ENCODE measurements at regions of chr15 and their contacts with region 1.

Region 1: GRCh38 chr15:76150971-76151598 is 91.3 kb downstream of the TMEM266 start:
- DNase-seq: peak; percentile 93
- H3K4me3 Mint-ChIP-seq: no peak overlapping the region
- H3K27ac Mint-ChIP-seq: no peak overlapping the region
- H3K4me1 Mint-ChIP-seq: peaks cover 22% of the 10 kb centered on the region
- H3K27me3 Mint-ChIP-seq: peaks cover 13% of the 10 kb centered on the region

Region 2: DNA sequence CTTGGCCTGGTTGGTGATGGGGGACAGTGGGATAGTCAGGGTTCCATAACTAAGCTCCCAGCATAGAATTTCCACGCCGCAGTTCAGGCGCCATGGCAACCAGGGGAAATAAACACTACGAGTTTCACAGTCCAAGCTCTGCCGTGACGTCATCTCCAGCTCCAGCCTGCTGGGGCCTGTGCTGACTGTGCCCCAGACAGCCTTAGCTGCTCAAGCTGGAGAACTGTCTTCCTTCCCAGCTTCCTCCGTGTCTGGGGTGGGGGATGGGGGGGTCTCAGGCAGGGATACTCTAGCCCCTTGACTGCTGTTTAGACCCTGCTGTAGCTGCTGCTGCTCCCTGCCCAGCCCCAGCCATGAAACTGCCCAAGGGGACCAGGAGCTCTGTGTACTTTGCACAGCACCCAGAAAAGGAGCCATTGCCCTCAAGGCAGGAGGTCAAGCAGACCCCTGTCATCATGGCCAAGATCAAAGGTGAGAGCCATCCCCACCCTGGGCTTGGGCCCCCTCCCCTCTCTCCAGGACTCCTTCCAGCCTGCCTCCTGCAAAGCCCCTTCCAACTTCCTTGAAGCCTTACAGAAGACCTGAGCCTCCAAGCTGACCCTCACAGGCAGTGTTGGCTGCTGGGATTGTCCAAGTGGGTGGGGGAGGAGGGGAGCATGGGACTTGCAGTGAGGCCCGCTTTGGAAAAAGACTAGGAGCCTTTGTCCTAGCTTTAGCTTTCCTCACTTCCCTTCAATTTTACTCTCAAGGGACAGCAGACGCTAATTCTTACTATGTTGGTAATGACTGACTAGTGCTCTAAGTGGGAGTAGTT is 427.0 kb before region 1 on chr15:
- CTCF ChIA-PET with region 1: no interaction called
- intact Hi-C with region 1: loop called (anchors 1 kb)
- DNase-seq: peak; percentile 54
- H3K4me3 Mint-ChIP-seq: no peak overlapping the region
- H3K27ac Mint-ChIP-seq: no peak overlapping the region
- H3K4me1 Mint-ChIP-seq: peaks cover 6% of the 10 kb centered on the region
- H3K27me3 Mint-ChIP-seq: peaks cover 8% of the 10 kb centered on the region

Region 3: DNA sequence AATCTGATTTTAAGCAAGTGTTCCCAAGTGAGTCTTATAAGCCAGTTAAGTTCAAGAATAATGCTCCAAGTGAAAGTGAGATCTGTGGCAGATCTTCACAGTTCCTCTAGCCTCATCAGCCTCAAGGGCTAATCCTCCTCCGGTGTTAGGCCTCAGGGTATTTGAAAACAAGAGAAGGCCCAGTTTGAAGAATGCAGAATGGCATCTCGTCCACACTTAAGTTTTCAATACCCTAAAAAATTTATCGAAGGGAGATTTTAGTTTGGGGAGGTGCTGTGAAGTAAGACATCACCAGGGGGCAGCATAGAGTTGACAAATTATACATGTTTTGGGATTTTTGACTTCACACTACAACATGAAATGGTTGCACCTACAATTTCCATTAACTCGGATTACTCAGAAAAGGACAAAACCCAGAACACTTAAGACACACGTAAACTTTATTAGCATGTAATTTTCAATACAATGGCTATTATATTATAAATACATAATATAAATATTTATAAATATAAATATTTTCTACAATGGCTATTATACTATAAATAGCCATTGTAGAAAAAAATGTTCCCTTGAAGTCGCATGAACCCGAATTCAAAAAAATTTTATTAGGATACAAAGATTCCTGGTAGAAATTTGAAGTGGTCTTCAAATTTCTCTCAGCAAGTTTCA is 93.6 kb before region 1 on chr15:
- CTCF ChIA-PET with region 1: interaction called, 79 read pairs
- intact Hi-C with region 1: loop called (anchors 1 kb)
- DNase-seq: peak; percentile 62
- H3K4me3 Mint-ChIP-seq: no peak overlapping the region
- H3K27ac Mint-ChIP-seq: no peak overlapping the region
- H3K4me1 Mint-ChIP-seq: peaks cover 29% of the 10 kb centered on the region
- H3K27me3 Mint-ChIP-seq: peaks cover 34% of the 10 kb centered on the region

Region 4: DNA sequence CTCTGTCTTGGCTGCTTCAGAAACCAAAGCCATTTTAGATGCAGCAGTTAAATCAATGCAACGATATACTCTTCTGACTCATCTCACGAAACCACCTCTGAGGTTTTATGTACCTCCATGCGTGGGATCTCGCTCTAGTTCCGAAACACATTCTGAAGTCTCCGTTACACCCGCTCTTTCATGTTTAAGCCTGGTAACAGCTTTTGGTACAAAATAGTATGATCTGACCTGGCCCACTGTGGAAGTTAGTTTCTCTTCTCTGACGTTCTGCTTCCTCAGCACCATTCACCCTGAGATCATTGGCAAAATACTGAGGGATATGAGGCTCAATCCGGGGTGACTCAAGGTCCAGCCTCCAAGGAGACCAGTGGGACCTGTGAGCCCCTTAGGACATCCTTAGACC is 30.6 kb after region 1 on chr15:
- CTCF ChIA-PET with region 1: interaction called, 8 read pairs
- intact Hi-C with region 1: loop called (anchors 2 kb)
- DNase-seq: peak; percentile 55
- H3K4me3 Mint-ChIP-seq: no peak overlapping the region
- H3K27ac Mint-ChIP-seq: peak overlapping the region; percentile 1
- H3K4me1 Mint-ChIP-seq: peaks cover 11% of the 10 kb centered on the region
- H3K27me3 Mint-ChIP-seq: peaks cover 53% of the 10 kb centered on the region

Region 5: DNA sequence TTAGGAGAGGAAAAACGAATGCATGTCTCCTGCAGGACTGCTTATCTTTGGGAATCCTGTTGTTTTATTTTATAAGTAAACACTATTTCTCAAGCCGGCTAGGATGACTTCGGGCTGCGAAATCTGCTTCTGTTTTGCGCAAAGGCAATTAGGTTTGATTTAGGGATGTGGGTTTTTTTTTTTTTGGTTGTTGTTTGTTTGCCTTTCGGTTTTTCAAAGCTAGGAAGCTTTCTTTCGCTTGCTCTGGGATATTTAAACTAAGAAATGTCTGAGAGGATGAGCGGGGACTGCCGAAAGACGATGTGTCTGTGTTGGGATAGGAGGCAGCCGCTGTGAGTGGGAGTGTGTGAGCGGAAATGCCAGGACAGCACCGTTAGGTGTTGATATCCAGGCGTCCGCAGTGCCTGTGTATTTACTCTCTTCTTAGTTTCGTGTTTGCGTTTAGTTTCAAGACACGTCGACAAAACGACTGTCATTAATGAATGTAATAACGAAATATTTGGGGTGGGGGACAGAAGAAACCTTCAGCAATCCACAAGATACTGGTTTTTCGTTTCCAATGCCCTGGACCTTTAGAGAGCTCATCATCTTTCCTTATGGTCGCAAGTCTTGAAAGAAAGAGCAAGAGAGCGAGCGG is 186.1 kb after region 1 on chr15:
- CTCF ChIA-PET with region 1: no interaction called
- intact Hi-C with region 1: no loop called
- DNase-seq: no peak
- H3K4me3 Mint-ChIP-seq: peak overlapping the region; percentile 73
- H3K27ac Mint-ChIP-seq: no peak overlapping the region
- H3K4me1 Mint-ChIP-seq: peaks cover 49% of the 10 kb centered on the region
- H3K27me3 Mint-ChIP-seq: peaks cover 80% of the 10 kb centered on the region

Region 6: DNA sequence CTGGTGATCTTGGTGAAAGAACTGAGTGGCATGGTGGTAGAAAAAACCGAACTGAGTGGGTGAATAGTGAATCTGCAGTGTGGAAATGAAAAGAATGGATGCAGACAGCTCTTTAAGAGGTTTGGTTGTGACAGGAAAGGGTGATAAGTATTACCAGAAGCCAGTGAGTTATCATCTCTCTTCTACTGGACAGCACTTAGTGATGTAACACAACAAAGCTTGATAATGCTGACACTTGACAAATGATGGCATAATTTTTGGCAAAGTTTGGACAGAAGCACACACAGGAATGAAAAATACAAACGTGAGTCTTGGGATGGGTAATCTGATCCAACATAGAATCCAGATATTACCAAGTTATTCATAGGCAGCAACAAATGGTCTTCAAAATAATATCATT is 297.7 kb after region 1 on chr15:
- CTCF ChIA-PET with region 1: no interaction called
- intact Hi-C with region 1: no loop called
- DNase-seq: no peak
- H3K4me3 Mint-ChIP-seq: no peak overlapping the region
- H3K27ac Mint-ChIP-seq: no peak overlapping the region
- H3K4me1 Mint-ChIP-seq: no peaks in the 10 kb centered on the region
- H3K27me3 Mint-ChIP-seq: no peaks in the 10 kb centered on the region

Measured in activated naive CD4-positive, alpha-beta T cell treated with anti-CD3 and anti-CD28 coated beads for 36 hours (primary cell).